CD4-positive, alpha-beta memory T cell (primary cell): ENCODE measurements at regions of chrX and their contacts with region 1.

Region 1: GRCh38 chrX:19739683-19740082 is 147.7 kb downstream of the SH3KBP1 start:
- DNase-seq: peak; percentile 39 to 47 (median 42)
- H3K4me3 ChIP-seq: no peak overlapping the region
- H3K4me3 Mint-ChIP-seq: peak overlapping the region in 4 of 8 donors; percentile 39 to 85 (median 62)
- H3K27ac ChIP-seq: peak overlapping the region; percentile 21
- H3K27ac Mint-ChIP-seq: peak overlapping the region; percentile 71 to 98 (median 86)
- H3K4me1 ChIP-seq: peaks cover 90% of the 10 kb centered on the region
- H3K4me1 Mint-ChIP-seq: peaks cover 47 to 84% (median 68%) of the 10 kb centered on the region in 4 donors
- H3K27me3 ChIP-seq: no peaks in the 10 kb centered on the region
- H3K27me3 Mint-ChIP-seq: no peaks in the 10 kb centered on the region

Region 2: GRCh38 chrX:19725641-19726040 is 14.0 kb before region 1 on chrX:
- CTCF ChIA-PET with region 1: interaction called, 13 read pairs
- POLR2A ChIA-PET with region 1: no interaction called
- intact Hi-C with region 1: no loop called
- DNase-seq: peak in 2 of 5 donors; percentile 21 to 47
- H3K4me3 ChIP-seq: no peak overlapping the region
- H3K4me3 Mint-ChIP-seq: peak overlapping the region in 7 of 8 donors; percentile 10 to 57 (median 39)
- H3K27ac ChIP-seq: peak overlapping the region; percentile 9
- H3K27ac Mint-ChIP-seq: peak overlapping the region; percentile 43 to 95 (median 77)
- H3K4me1 ChIP-seq: peaks cover 73% of the 10 kb centered on the region
- H3K4me1 Mint-ChIP-seq: peaks cover 30 to 80% (median 61%) of the 10 kb centered on the region in 4 donors
- H3K27me3 ChIP-seq: no peaks in the 10 kb centered on the region
- H3K27me3 Mint-ChIP-seq: no peaks in the 10 kb centered on the region

Region 3: GRCh38 chrX:19799319-19800182 is 59.9 kb after region 1 on chrX:
- CTCF ChIA-PET with region 1: interaction called, 13 read pairs
- POLR2A ChIA-PET with region 1: interaction called, 109 read pairs
- intact Hi-C with region 1: no loop called
- DNase-seq: peak; percentile 64 to 76 (median 72)
- H3K4me3 ChIP-seq: peak overlapping the region; percentile 55 to 68
- H3K4me3 Mint-ChIP-seq: peak overlapping the region; percentile 90 to 96 (median 93)
- H3K27ac ChIP-seq: peak overlapping the region; percentile 68
- H3K27ac Mint-ChIP-seq: peak overlapping the region; percentile 88 to 98 (median 95)
- H3K4me1 ChIP-seq: peaks cover 67% of the 10 kb centered on the region
- H3K4me1 Mint-ChIP-seq: peaks cover 38 to 81% (median 51%) of the 10 kb centered on the region in 4 donors
- H3K27me3 ChIP-seq: no peaks in the 10 kb centered on the region
- H3K27me3 Mint-ChIP-seq: no peaks in the 10 kb centered on the region

Region 4: DNA sequence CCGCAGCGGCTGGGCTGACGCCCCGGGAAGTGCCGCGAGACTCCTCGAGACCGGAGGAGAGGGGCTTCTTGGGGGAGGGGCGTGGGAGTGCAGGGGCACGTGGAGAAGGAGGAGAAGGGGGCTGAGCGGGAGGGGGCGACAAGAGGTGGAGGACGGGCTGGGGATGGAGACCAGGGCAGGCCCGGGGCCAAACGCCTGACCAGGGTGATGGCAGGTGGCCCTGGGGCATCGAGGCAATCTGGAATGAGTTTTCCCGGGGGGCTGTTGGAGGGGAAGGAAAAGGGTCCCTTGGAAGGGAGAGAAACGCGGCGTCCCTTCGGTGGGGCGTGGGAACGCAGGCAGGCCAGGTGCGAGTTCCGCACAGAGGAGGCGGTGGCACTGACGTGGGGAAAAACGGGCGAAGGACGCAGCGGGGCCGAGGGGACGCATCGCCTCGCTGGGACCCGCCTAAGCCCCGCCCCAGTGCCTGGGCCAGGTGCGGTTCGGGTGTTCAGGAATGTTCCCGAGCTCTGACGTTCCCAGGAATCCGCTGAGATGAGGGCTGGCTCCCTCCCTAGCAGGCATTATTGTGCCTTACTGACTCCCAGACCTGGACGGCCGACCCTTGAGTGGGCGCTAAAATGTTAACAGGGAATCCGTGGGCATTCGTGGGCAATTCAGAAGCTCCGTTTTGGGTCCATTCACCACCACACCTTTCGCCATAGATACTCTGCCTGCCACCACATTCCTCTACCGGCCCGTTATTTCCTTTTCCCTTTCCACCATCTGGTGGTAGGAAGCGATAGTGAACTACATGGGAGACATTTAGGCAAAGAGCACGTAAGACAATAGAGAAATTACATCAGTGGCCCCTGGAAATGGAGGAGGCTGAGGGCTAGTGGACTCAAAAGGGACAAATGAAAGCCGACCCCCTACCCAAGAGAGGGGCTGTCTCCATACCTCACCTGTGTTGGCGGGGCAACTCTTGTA is 148.5 kb after region 1 on chrX:
- CTCF ChIA-PET with region 1: interaction called, 9 read pairs
- POLR2A ChIA-PET with region 1: interaction called, 33 read pairs
- intact Hi-C with region 1: loop called (anchors 1 kb)
- DNase-seq: peak; percentile 54 to 63 (median 58)
- H3K4me3 ChIP-seq: peak overlapping the region; percentile 23 to 51
- H3K4me3 Mint-ChIP-seq: peak overlapping the region; percentile 72 to 86 (median 80)
- H3K27ac ChIP-seq: peak overlapping the region; percentile 59
- H3K27ac Mint-ChIP-seq: peak overlapping the region; percentile 77 to 96 (median 89)
- H3K4me1 ChIP-seq: peaks cover 36% of the 10 kb centered on the region
- H3K4me1 Mint-ChIP-seq: peaks cover 24 to 50% (median 35%) of the 10 kb centered on the region in 4 donors
- H3K27me3 ChIP-seq: no peaks in the 10 kb centered on the region
- H3K27me3 Mint-ChIP-seq: no peaks in the 10 kb centered on the region